SK-N-SH (cell line): ENCODE measurements at regions of chr14 and their contacts with region 1.

Region 1: GRCh38 chr14:100108042-100108825 is 43.0 kb downstream of the EVL start:
- DNase-seq: peak; percentile 92
- H3K4me3 ChIP-seq: no peak overlapping the region
- H3K27ac ChIP-seq: peak overlapping the region in 1 of 2 experiments; percentile 43; a peak in 1 of 4 replicates
- H3K4me1 ChIP-seq: peaks cover 15 to 22% of the 10 kb centered on the region in 2 experiments; a peak in 3 of 4 replicates
- H3K27me3 ChIP-seq: no peaks in the 10 kb centered on the region
- CTCF ChIP-seq: peak; percentile 84
- EP300 ChIP-seq: peak in 1 of 2 experiments; percentile 62; a peak in 1 of 4 replicates
- RAD21 ChIP-seq: peak; percentile 78

Region 2: GRCh38 chr14:99976666-99977065 is 131.6 kb before region 1 on chr14:
- CTCF ChIA-PET with region 1: interaction called, 68 read pairs
- POLR2A ChIA-PET with region 1: no interaction called
- DNase-seq: no peak
- H3K4me3 ChIP-seq: no peak overlapping the region
- H3K27ac ChIP-seq: no peak overlapping the region
- H3K4me1 ChIP-seq: peaks cover 0 to 7% of the 10 kb centered on the region in 2 experiments; a peak in 1 of 4 replicates
- H3K27me3 ChIP-seq: no peaks in the 10 kb centered on the region
- CTCF ChIP-seq: no peak
- EP300 ChIP-seq: no peak
- RAD21 ChIP-seq: no peak

Region 3: GRCh38 chr14:100019156-100019744 is 89.0 kb before region 1 on chr14:
- CTCF ChIA-PET with region 1: interaction called, 11 read pairs
- POLR2A ChIA-PET with region 1: no interaction called
- DNase-seq: peak; percentile 62
- H3K4me3 ChIP-seq: no peak overlapping the region
- H3K27ac ChIP-seq: peak overlapping the region in 1 of 2 experiments; percentile 72; a peak in 2 of 4 replicates
- H3K4me1 ChIP-seq: peaks cover 17 to 24% of the 10 kb centered on the region in 2 experiments
- H3K27me3 ChIP-seq: no peaks in the 10 kb centered on the region
- CTCF ChIP-seq: no peak
- EP300 ChIP-seq: no peak
- RAD21 ChIP-seq: peak; percentile 6; the same call in 1 of the 2 replicates

Region 4: GRCh38 chr14:100081997-100082625 is 26.1 kb before region 1 on chr14:
- CTCF ChIA-PET with region 1: interaction called, 15 read pairs
- POLR2A ChIA-PET with region 1: no interaction called
- DNase-seq: no peak
- H3K4me3 ChIP-seq: no peak overlapping the region
- H3K27ac ChIP-seq: no peak overlapping the region
- H3K4me1 ChIP-seq: peaks cover 17 to 20% of the 10 kb centered on the region in 2 experiments
- H3K27me3 ChIP-seq: no peaks in the 10 kb centered on the region
- CTCF ChIP-seq: no peak
- EP300 ChIP-seq: no peak
- RAD21 ChIP-seq: no peak

Region 5: GRCh38 chr14:100122481-100123222 is 14.4 kb after region 1 on chr14:
- CTCF ChIA-PET with region 1: interaction called, 70 read pairs
- POLR2A ChIA-PET with region 1: no interaction called
- DNase-seq: no peak
- H3K4me3 ChIP-seq: no peak overlapping the region
- H3K27ac ChIP-seq: no peak overlapping the region
- H3K4me1 ChIP-seq: peaks cover 0 to 4% of the 10 kb centered on the region in 2 experiments; a peak in 1 of 4 replicates
- H3K27me3 ChIP-seq: no peaks in the 10 kb centered on the region
- CTCF ChIP-seq: no peak
- EP300 ChIP-seq: no peak
- RAD21 ChIP-seq: peak; percentile 57

Region 6: GRCh38 chr14:100140452-100141078 is 32.3 kb after region 1 on chr14:
- CTCF ChIA-PET with region 1: interaction called, 38 read pairs
- POLR2A ChIA-PET with region 1: no interaction called
- DNase-seq: no peak
- H3K4me3 ChIP-seq: no peak overlapping the region
- H3K27ac ChIP-seq: peak overlapping the region in 1 of 2 experiments; percentile 96; a peak in 1 of 4 replicates
- H3K4me1 ChIP-seq: peaks cover 0 to 44% of the 10 kb centered on the region in 2 experiments; a peak in 1 of 4 replicates
- H3K27me3 ChIP-seq: no peaks in the 10 kb centered on the region
- CTCF ChIP-seq: no peak
- EP300 ChIP-seq: no peak
- RAD21 ChIP-seq: no peak

Region 7: GRCh38 chr14:100192672-100193416 is 84.6 kb after region 1 on chr14:
- CTCF ChIA-PET with region 1: interaction called, 43 read pairs
- POLR2A ChIA-PET with region 1: no interaction called
- DNase-seq: peak; percentile 99
- H3K4me3 ChIP-seq: peak overlapping the region; percentile 44 to 54
- H3K27ac ChIP-seq: peak overlapping the region; percentile 44 to 77
- H3K4me1 ChIP-seq: peaks cover 4 to 12% of the 10 kb centered on the region in 2 experiments; a peak in 2 of 4 replicates
- H3K27me3 ChIP-seq: no peaks in the 10 kb centered on the region
- CTCF ChIP-seq: peak; percentile 81
- EP300 ChIP-seq: no peak
- RAD21 ChIP-seq: peak; percentile 85